MCF 10A (cell line): ENCODE measurements at regions of chr5 and their contacts with region 1.

Region 1: DNA sequence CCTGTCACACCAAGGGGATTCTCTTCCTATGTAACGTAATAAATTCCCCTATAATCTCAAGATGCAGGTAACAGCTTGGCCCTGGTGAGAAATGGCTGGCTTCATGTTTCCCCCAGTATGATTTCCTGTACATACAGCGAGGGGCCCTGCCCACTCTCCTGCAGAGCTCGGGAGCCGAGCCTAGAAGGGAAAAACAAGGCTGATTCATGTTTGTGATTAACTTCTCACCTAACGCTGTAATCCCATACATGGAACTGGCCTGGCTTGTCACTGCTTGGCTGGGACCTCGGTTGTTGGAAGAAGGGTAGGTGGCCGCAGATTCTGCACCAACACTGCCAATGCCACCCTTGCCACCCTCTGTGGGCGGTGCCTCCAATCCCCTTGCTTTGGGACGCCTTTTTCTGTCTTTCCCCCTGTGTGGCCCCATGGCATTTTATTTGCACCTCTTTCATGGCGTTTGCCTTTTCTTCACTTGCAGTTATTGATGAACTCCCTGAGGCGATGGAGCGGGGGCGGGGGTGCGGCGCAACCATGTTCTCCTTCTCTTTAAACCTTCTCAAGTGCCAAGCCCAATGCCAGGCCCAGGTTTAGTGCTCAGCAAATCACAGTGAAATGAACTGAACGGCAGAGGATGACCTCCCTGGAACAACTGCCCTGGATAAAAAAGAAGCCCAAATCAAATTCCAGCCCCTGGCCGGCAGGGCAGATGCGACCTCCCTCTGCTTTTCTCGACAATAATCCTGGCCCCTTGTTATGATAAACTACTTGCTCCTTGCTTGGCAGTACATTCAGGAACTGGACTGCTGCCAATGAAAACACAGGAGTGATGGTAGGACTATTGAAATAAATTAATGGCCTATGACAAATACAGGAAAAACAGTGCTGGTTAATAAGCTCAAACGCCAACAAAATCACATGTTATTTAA is 108.1 kb downstream of the TMEM174 start:
- DNase-seq: peak; percentile 96
- H3K4me3 Mint-ChIP-seq: peak overlapping the region; percentile 49
- H3K27ac Mint-ChIP-seq: peak overlapping the region; percentile 72
- H3K4me1 Mint-ChIP-seq: peaks cover 53% of the 10 kb centered on the region
- H3K27me3 Mint-ChIP-seq: no peaks in the 10 kb centered on the region
- CTCF ChIP-seq: no peak

Region 2: DNA sequence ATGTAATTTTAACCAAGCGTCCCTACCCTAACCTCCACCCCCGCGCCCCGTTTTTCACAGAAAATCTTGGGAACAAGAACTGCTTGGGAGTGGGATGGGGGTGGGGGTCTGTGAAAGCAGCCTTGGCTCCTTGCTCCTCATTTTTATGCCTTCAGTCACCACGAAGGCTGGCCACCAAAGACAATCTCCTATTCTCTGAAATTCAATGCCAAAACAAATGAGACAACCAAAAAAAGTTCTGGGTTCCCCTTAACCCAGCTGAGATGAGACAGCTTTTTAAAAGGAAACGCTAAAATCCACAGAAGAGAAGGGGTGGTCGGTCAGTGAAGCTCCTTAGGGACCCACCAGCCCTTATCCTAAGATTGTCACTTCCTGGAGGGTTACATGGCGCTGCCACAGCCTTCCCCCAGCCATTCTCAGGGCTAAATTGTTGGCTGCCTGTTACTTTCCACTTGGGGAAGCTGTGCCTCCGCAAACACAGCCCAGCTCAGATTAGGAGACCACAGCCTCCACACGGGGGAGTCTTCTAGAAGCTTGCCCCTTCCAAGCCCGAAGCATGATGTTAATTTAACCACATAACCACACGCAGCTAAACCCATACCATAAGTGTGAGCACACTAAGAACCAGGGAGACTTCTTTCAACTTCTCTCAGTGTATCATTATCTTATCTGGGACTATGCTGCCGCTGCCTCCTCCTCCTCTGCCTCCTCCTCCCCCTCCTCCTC is 31.2 kb after region 1 on chr5:
- CTCF ChIA-PET with region 1: no interaction called
- POLR2A ChIA-PET with region 1: interaction called, 11 read pairs
- intact Hi-C with region 1: no loop called
- DNase-seq: no peak
- H3K4me3 Mint-ChIP-seq: no peak overlapping the region
- H3K27ac Mint-ChIP-seq: peak overlapping the region; percentile 75
- H3K4me1 Mint-ChIP-seq: peaks cover 13% of the 10 kb centered on the region
- H3K27me3 Mint-ChIP-seq: no peaks in the 10 kb centered on the region
- CTCF ChIP-seq: no peak